ENCODE measurements at regions of chr10 and their contacts with region 1.

Region 1: DNA sequence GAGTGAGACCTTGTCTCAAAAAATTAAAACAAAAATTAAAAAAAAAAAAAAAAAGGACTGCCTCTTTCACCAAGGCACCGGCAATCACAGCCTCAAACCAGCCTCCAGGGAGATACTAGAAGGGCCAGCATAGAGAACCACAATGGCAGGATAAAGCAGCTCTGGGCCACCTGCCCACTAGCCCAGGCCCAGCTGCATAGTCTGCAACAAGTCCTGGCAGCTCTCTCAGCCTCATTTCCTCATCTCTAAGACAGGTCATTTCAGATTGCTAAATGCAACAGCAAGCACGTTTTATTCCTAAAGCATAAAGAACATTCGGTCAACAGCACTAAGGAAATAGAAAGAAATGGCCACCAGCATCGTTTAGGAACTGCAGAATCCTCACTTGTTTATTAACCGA is 28.8 kb downstream of the XPNPEP1 start:
- DNase-seq: peak; percentile 90

Region 2: DNA sequence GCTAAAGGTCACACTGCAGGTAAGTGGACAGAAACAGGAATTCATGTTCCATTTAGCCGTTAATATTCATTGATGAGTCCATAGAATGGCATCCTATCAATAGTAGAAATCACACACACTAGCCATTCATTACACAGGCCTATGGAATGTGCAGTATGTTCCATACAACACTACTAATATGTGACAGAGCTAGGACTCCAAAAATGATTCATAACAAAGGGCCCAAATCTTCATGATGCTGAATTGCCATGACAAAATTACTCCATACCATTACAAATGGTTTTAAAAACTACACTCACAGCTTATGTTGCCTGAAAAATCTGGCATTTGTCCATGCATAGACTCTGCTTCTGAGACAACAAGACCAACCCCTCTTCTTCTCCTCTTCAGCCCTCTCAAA is 520.3 kb before region 1 on chr10:
- intact Hi-C with region 1: no loop called
- DNase-seq: no peak

Region 3: GRCh38 chr10:109966961-109967738 is 72.6 kb after region 1 on chr10:
- intact Hi-C with region 1: loop called in 1 of 2 experiments (anchors 5 kb)
- DNase-seq: no peak

Region 4: GRCh38 chr10:110007701-110008517 is 113.4 kb after region 1 on chr10 and contains the start of gene ADD3:
- intact Hi-C with region 1: loop called in 1 of 2 experiments (anchors 10 kb)
- DNase-seq: peak; percentile 97
- total RNA-seq, gene ADD3: 95.0 to 116 TPM

Measured in posterior vena cava (tissue), 2 donors.